ENCODE measurements at regions of chr4 and their contacts with region 1.

Region 1: DNA sequence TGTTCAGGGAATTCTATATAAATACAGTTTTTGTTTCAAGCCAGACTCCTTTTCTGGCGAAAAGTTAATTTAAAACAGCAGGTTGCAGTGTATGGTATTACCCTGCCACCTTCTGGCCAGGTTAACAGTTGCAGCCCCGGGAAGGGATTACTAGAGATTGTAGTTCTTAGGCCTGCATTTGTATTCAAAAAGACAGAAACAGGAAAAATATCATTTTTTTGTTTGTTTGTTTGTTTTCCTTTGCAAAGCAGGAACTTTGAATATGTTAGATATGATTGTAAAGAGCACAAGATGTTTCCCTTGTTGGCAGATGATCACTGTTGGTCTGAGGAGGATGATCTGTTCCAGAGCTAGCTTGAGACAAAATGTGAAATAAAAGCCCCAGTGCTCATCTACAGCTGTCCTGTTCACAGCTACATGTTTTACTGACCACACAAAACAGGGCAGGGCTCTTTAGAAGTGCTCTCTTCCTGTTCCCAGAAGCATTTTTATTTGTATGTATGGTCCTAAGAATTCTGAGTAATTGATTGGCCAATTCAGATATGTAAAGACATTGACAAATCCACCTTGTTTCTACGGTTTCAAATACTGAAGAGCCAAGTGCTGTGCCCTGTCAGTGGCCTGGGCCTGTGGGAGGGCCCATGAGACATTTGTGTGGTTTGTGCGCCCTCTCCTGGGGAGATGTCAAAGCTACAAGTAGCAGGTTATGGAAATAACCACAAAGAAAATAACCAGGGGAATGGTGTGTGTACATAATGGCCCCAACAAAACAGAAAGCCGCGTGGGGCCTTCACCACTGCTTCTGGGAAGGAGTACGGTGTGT is 57.9 kb downstream of the CLDN22 start:
- DNase-seq: peak; percentile 70 to 85 (median 72)
- ATAC-seq: peak; percentile 98
- H3K4me3 ChIP-seq: no peak overlapping the region
- H3K27ac ChIP-seq: no peak overlapping the region
- H3K4me1 ChIP-seq: peaks cover 0 to 4% of the 10 kb centered on the region in 2 experiments; a peak in 3 of 5 replicates
- H3K27me3 ChIP-seq: no peaks in the 10 kb centered on the region
- CTCF ChIP-seq: peak; percentile 86 to 91 (median 88)
- EP300 ChIP-seq: no peak
- POLR2A ChIP-seq: no peak
- RAD21 ChIP-seq: peak; percentile 77 to 85

Region 2: DNA sequence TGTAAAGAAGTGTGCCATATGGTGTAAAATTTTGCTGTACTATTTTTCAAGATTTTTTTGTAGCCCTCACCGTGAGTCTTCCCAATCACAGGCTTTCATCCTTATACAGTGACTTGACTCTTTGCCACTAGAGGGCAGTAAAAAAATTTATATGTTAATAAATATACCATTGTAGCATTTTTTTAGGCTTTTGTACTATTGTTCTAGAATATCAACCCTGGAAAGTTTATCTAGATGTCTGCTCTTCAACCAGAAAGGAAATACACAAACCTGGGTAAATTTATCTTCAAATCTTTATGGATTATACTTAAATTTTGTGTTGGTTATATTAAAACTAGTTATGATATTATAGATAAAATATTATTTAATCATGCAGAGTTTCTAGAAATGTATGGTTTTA is 783.7 kb before region 1 on chr4:
- CTCF ChIA-PET with region 1: interaction called, 9 read pairs
- POLR2A ChIA-PET with region 1: no interaction called
- in situ Hi-C with region 1: loop called (anchors 25 kb)
- intact Hi-C with region 1: loop called (anchors 5 kb)
- DNase-seq: peak; percentile 7 to 26 (median 18)
- ATAC-seq: peak; percentile 74
- H3K4me3 ChIP-seq: no peak overlapping the region
- H3K27ac ChIP-seq: no peak overlapping the region
- H3K4me1 ChIP-seq: no peaks in the 10 kb centered on the region
- H3K27me3 ChIP-seq: no peaks in the 10 kb centered on the region
- CTCF ChIP-seq: peak; percentile 24 to 48 (median 26); a peak in 3 of 6 replicates
- EP300 ChIP-seq: no peak
- POLR2A ChIP-seq: no peak
- RAD21 ChIP-seq: peak in 1 of 2 experiments; percentile 20; a peak in 1 of 4 replicates

Region 3: GRCh38 chr4:182925298-182925738 is 336.8 kb before region 1 on chr4:
- CTCF ChIA-PET with region 1: interaction called, 12 read pairs
- POLR2A ChIA-PET with region 1: no interaction called
- in situ Hi-C with region 1: no loop called
- intact Hi-C with region 1: no loop called
- DNase-seq: peak; percentile 48 to 90 (median 63)
- ATAC-seq: peak; percentile 99
- H3K4me3 ChIP-seq: no peak overlapping the region
- H3K27ac ChIP-seq: no peak overlapping the region
- H3K4me1 ChIP-seq: peaks cover 0 to 3% of the 10 kb centered on the region in 2 experiments; a peak in 1 of 5 replicates
- H3K27me3 ChIP-seq: no peaks in the 10 kb centered on the region
- CTCF ChIP-seq: peak; percentile 95 to 98 (median 98)
- EP300 ChIP-seq: no peak
- POLR2A ChIP-seq: no peak
- RAD21 ChIP-seq: peak; percentile 82 to 84

Region 4: DNA sequence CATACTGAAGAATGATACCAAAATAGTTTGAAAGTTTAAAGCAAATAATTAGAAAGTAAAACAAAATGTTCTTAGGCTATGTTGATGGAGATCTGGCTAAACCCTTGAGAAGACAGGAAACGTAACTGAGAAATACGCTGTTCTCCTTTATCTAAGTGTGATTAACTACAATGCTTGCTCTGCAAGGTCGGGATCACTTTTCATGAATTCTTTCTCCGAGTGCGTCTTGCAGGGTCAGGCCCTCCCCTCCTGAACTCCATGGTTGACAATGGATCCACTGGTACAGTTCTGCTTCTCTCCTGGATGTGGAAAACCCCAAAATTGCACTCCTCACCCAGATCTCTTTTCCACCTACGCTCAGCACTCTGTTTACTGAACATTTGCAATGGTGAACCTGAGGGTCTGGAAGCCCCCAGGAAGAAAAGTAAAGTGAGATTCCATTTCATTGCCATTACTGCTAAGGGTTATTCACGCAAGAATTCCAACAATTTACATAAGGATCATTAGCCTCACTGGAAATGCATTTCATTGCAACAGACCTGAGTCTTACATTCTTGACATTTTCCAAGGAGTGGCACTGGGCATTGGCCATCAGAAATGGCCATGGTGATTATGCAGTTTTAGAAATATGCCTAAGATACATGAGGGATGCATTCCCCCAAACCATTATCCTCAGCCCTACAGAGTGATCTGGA is 187.7 kb before region 1 on chr4:
- CTCF ChIA-PET with region 1: interaction called, 44 read pairs
- POLR2A ChIA-PET with region 1: interaction called, 4 read pairs
- in situ Hi-C with region 1: loop called (anchors 5 kb)
- intact Hi-C with region 1: loop called (anchors 1 kb)
- DNase-seq: no peak
- ATAC-seq: no peak
- H3K4me3 ChIP-seq: no peak overlapping the region
- H3K27ac ChIP-seq: no peak overlapping the region
- H3K4me1 ChIP-seq: no peaks in the 10 kb centered on the region
- H3K27me3 ChIP-seq: no peaks in the 10 kb centered on the region
- CTCF ChIP-seq: no peak
- EP300 ChIP-seq: no peak
- POLR2A ChIP-seq: no peak
- RAD21 ChIP-seq: no peak

Region 5: GRCh38 chr4:183276106-183276505 is 13.9 kb after region 1 on chr4:
- CTCF ChIA-PET with region 1: no interaction called
- POLR2A ChIA-PET with region 1: no interaction called
- in situ Hi-C with region 1: no loop called
- intact Hi-C with region 1: no loop called
- DNase-seq: no peak
- ATAC-seq: no peak
- H3K4me3 ChIP-seq: no peak overlapping the region
- H3K27ac ChIP-seq: no peak overlapping the region
- H3K4me1 ChIP-seq: no peaks in the 10 kb centered on the region
- H3K27me3 ChIP-seq: no peaks in the 10 kb centered on the region
- CTCF ChIP-seq: no peak
- EP300 ChIP-seq: no peak
- POLR2A ChIP-seq: no peak
- RAD21 ChIP-seq: no peak

Region 6: DNA sequence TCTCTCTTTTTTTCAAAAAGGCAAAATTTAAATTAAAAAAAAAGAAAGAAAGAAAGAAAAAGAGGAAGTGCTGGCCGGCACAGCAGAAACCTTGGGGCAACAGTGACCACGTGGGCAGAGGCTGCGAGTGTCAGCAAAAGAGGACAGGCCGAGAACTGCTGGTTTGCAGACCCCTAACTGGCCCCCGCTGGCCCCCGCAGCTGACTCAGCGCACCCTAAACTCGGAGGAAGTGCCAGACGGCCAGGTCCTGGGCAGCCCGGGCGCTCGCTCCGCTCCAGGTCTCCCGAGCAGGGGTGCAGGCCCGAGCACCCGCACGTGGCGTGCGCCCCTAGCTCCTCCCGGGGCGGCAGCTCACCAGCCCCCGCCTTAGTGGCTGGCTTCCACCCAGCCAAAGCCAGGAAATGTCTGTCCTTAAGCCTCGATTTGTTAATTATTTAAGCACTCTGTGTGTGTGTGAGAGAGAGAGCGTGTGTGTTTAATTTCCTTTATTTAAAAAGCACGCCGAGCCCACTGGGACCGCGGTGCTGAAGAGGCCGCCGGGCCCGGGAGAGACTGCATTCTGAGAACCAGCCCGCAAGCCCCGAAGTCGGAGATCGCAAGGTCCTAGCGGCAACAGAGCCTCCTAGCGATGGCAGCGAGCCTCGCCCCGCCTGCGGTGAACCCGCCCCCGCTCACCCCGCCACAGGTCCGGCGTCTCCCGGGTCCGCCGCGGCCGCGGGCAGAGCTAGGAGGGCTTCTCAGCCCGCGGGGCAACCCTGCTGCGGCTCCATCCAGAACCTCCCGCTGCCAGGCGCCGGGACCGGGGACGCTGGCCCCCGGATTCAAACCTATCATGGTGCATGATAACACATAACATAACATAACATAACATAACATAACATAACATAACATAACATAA is 136.3 kb after region 1 on chr4:
- CTCF ChIA-PET with region 1: no interaction called
- POLR2A ChIA-PET with region 1: no interaction called
- in situ Hi-C with region 1: no loop called
- intact Hi-C with region 1: loop called (anchors 2 kb)
- DNase-seq: peak; percentile 80 to 86 (median 82)
- ATAC-seq: peak; percentile 94
- H3K4me3 ChIP-seq: peak overlapping the region; percentile 20; the same call in 1 of the 2 replicates
- H3K27ac ChIP-seq: peak overlapping the region; percentile 84
- H3K4me1 ChIP-seq: peaks cover 34 to 51% of the 10 kb centered on the region in 2 experiments
- H3K27me3 ChIP-seq: no peaks in the 10 kb centered on the region
- CTCF ChIP-seq: peak; percentile 67 to 76 (median 76)
- EP300 ChIP-seq: no peak
- POLR2A ChIP-seq: peak; percentile 75
- RAD21 ChIP-seq: peak; percentile 46 to 53

Region 7: GRCh38 chr4:184074989-184075388 is 812.8 kb after region 1 on chr4:
- CTCF ChIA-PET with region 1: no interaction called
- POLR2A ChIA-PET with region 1: no interaction called
- in situ Hi-C with region 1: no loop called
- intact Hi-C with region 1: no loop called
- DNase-seq: no peak
- ATAC-seq: no peak
- H3K4me3 ChIP-seq: no peak overlapping the region
- H3K27ac ChIP-seq: no peak overlapping the region
- H3K4me1 ChIP-seq: no peaks in the 10 kb centered on the region
- H3K27me3 ChIP-seq: peaks cover 6 to 32% of the 10 kb centered on the region in 2 experiments; a peak in 3 of 5 replicates
- CTCF ChIP-seq: no peak
- EP300 ChIP-seq: no peak
- POLR2A ChIP-seq: no peak
- RAD21 ChIP-seq: no peak

Measured in K562 (cell line).